ENCODE measurements at regions of chr3 and their contacts with region 1.

Region 1: DNA sequence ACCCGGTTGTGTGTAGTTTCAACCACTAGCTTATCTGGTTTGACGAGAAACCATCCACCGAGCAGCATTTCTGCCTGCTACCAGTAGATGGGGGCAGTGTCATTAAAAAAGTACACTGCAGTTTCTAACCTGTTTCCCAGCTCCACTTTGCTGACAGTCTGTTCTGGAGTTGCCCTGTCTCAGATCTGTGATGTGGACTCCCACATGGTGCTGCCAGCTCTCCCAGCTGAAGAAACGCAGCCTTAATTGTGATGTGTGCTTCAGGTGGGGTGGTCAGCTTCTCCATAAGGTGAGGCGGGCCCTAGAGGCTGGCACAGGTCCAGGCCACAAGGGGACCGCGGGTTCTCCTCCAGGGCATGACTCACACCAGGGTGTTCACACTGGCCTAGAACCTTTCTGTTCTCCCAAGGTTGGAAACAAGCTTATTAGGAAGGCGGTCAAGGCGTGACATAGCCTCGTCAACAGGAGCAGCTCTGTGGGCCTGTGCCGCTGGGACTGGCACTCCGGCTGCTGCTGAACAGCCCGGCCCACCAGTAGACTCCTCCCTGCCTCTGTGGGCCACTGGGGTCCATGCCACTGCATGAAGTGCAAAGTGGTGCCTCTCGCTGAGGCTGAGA is 2.9 kb upstream of the FAM43A start:
- DNase-seq: peak; percentile 62 to 76 (median 73)
- ATAC-seq: peak; percentile 61 to 62
- H3K4me3 ChIP-seq: no peak overlapping the region
- H3K27ac ChIP-seq: no peak overlapping the region
- H3K4me1 ChIP-seq: no peaks in the 10 kb centered on the region
- H3K27me3 ChIP-seq: no peaks in the 10 kb centered on the region

Region 2: GRCh38 chr3:194761384-194761783 is 78.6 kb after region 1 on chr3:
- intact Hi-C with region 1: no loop called
- DNase-seq: no peak
- ATAC-seq: peak; percentile 33 to 49
- H3K4me3 ChIP-seq: no peak overlapping the region
- H3K27ac ChIP-seq: no peak overlapping the region
- H3K4me1 ChIP-seq: no peaks in the 10 kb centered on the region
- H3K27me3 ChIP-seq: no peaks in the 10 kb centered on the region

Region 3: DNA sequence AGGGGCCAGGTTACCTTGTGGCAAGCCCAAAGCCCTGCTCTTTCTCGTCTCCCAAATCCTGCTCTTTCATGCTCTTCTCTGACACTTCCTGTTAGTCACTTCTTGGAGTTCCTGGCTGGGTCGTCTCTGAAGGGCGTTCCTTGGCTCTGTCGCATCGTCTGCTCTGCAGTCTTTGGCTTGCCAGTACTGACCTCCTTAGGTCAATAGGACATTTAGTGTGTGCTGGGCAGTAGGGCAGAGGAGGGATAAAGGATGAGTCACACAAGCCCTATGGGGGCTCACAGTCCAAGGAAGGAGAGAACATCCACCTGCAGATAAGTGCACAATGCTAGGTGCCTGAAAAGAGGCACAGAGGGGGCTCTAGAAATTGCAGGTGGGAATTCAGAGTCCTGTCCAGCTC is 90.4 kb after region 1 on chr3:
- intact Hi-C with region 1: loop called in 1 of 4 experiments (anchors 10 kb)
- DNase-seq: peak; percentile 74 to 80 (median 78)
- ATAC-seq: peak; percentile 64 to 81
- H3K4me3 ChIP-seq: no peak overlapping the region
- H3K27ac ChIP-seq: peak overlapping the region; percentile 37
- H3K4me1 ChIP-seq: peaks cover 13% of the 10 kb centered on the region
- H3K27me3 ChIP-seq: no peaks in the 10 kb centered on the region

Region 4: DNA sequence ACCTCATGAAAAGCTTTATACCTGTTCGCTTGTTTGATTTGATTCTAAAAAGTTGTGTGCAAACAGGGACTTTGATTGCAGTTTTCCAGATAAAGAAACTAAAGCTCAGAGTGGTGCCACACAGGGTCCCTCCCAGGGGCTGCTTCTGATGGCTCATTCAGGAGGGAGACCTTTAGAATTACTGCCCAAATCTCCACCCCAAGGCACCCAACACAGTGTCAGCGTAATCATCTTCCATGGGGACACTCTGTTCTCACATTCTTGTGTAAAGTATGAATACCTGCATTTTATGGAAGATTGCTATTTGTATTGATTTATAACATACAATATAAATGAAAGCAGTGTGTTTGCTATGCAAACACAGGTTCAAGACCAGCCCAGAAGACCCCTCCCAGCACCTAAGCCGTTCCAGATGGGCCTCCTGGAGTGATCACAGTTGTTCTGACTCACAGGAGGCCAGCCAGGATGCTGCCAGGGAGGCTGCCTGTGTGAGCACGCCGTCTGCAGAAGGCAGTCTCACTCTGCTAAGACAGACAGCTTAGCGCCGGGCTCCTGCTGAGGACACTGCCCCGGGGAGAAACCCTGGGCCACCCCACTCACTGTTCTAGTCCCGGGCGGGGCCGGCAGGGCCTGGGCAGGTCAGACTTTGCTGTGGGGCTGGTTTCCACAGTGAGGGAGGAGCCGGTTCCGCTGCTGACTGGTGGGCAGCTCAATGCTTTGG is 188.5 kb after region 1 on chr3:
- intact Hi-C with region 1: loop called in 1 of 4 experiments (anchors 10 kb)
- DNase-seq: peak; percentile 50 to 81 (median 79)
- ATAC-seq: peak; percentile 67 to 75
- H3K4me3 ChIP-seq: no peak overlapping the region
- H3K27ac ChIP-seq: peak overlapping the region; percentile 6
- H3K4me1 ChIP-seq: peaks cover 13% of the 10 kb centered on the region
- H3K27me3 ChIP-seq: no peaks in the 10 kb centered on the region

Region 5: DNA sequence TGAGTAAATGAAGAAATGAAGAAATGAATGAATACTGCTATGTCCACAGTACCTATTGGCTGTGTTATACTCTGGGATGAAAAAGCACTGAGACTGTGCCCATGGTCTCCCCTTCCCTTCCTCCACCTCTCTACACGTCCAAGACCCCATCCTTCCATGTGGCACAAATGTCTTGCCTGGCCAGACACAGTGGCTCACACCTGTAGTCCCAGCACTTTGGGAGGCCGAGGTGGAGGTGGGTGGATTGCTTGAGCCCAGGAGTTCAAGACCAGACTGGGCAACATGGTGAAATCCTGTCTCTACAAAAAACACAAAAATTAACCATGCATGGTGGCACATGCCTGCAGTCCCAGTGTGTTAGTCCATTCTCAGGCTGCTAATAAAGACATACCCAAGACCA is 203.0 kb after region 1 on chr3:
- intact Hi-C with region 1: no loop called
- DNase-seq: no peak
- ATAC-seq: no peak
- H3K4me3 ChIP-seq: no peak overlapping the region
- H3K27ac ChIP-seq: no peak overlapping the region
- H3K4me1 ChIP-seq: peaks cover 2% of the 10 kb centered on the region
- H3K27me3 ChIP-seq: no peaks in the 10 kb centered on the region

Region 6: GRCh38 chr3:194952841-194953241 is 270.0 kb after region 1 on chr3:
- intact Hi-C with region 1: loop called in 2 of 4 experiments (anchors 10 kb)
- DNase-seq: peak in 1 of 3 donors; percentile 74
- ATAC-seq: peak; percentile 65 to 72
- H3K4me3 ChIP-seq: no peak overlapping the region
- H3K27ac ChIP-seq: no peak overlapping the region
- H3K4me1 ChIP-seq: peaks cover 11% of the 10 kb centered on the region
- H3K27me3 ChIP-seq: no peaks in the 10 kb centered on the region

Region 7: GRCh38 chr3:194985031-194985578 is 302.3 kb after region 1 on chr3:
- intact Hi-C with region 1: loop called in 1 of 4 experiments (anchors 10 kb)
- DNase-seq: peak; percentile 77 to 95 (median 91)
- ATAC-seq: peak; percentile 88 to 94
- H3K4me3 ChIP-seq: peak overlapping the region; percentile 2
- H3K27ac ChIP-seq: no peak overlapping the region
- H3K4me1 ChIP-seq: no peaks in the 10 kb centered on the region
- H3K27me3 ChIP-seq: no peaks in the 10 kb centered on the region

Region 8: DNA sequence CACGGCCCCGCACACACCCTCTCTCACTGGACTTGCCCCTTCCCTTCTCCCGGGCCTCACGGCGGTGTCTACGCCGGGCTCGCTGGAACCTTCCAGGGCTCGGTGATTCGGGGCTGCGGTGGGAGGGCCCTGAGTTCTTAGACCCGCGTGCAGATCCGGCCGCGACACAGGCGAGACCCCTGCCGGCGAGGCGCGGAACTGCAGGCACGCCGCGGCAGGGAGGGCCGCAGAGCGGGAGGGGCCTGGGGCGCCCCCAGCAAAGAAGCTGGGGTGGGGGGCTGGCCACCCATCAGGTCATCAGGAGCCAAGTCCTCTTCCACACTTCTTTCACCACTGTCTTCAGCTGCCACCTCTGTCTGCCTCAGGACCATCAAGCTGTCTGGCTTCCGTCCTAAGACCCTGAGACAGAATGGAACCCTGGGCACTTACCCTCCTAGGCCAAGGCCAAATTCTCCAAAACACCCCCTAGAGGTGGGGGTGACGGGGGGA is 423.7 kb after region 1 on chr3:
- intact Hi-C with region 1: loop called (anchors 2 to 5 kb)
- DNase-seq: peak; percentile 70 to 90 (median 88)
- ATAC-seq: peak; percentile 78 to 81
- H3K4me3 ChIP-seq: no peak overlapping the region
- H3K27ac ChIP-seq: no peak overlapping the region
- H3K4me1 ChIP-seq: peaks cover 5% of the 10 kb centered on the region
- H3K27me3 ChIP-seq: no peaks in the 10 kb centered on the region

Region 9: DNA sequence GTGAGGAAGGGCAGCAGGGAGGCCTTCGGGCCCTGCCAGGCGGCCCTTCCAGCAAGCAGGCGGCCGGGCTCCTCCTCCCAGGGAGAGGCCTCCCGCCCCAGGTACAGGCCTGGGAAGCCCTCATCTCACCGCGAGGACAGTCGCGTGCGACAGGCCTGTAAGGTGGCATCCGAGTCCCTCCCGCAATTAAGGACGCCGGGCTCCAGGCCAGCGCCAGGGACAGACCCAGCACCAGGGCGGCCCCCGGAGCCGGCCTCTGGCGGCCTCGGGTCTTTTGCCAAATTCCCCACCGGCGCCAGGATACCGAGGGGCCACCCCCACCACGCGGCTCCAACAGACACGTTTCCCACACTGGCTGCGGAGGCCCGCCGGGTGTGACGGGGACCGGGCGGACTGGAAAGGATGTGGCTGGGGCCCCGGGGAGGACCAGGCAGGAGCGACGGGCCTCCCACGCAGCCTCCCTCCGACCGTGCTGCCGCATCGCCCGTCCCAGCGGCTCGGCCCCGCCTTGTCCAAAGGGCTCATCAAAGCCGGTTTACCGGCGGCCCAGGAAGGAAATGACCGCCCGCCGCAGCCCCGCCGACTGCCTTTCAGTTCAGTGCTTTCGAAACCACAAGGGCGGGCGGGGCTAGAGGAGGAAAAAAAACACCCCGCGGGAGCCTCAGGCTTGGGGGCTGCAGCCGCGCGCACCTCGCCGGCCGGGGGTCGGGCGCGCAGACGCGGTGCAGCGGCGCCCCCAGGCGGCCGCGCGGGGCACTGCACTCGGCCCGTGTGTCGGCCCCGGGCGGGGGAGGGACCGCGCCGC is 576.9 kb after region 1 on chr3:
- intact Hi-C with region 1: loop called (anchors 2 to 5 kb)
- DNase-seq: peak; percentile 93 to 97 (median 95)
- ATAC-seq: peak; percentile 86 to 88
- H3K4me3 ChIP-seq: peak overlapping the region; percentile 66
- H3K27ac ChIP-seq: peak overlapping the region; percentile 77
- H3K4me1 ChIP-seq: no peaks in the 10 kb centered on the region
- H3K27me3 ChIP-seq: no peaks in the 10 kb centered on the region